ENCODE measurements at regions of chr3 and their contacts with region 1.

Region 1: DNA sequence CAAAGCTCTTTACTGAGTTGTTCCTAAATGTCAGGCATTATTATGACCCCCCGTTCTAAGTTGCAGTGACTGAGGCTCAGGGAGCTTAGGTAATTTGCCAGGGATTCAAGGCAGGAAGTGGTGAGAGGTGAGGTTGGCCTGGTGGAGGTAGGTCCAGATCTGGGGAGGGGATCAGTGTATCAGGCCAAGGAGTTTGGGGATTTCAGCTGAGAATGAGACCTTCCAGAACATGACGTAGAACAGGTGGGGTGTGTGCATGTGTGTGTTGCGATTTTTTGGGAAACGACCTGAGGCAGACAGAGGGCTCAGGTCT is 41.1 kb upstream of the MRPS22 start:
- DNase-seq: no peak
- H3K4me3 Mint-ChIP-seq: no peak overlapping the region
- H3K27ac Mint-ChIP-seq: peak overlapping the region; percentile 68
- H3K4me1 Mint-ChIP-seq: peaks cover 24% of the 10 kb centered on the region
- H3K27me3 Mint-ChIP-seq: peaks cover 8% of the 10 kb centered on the region

Region 2: DNA sequence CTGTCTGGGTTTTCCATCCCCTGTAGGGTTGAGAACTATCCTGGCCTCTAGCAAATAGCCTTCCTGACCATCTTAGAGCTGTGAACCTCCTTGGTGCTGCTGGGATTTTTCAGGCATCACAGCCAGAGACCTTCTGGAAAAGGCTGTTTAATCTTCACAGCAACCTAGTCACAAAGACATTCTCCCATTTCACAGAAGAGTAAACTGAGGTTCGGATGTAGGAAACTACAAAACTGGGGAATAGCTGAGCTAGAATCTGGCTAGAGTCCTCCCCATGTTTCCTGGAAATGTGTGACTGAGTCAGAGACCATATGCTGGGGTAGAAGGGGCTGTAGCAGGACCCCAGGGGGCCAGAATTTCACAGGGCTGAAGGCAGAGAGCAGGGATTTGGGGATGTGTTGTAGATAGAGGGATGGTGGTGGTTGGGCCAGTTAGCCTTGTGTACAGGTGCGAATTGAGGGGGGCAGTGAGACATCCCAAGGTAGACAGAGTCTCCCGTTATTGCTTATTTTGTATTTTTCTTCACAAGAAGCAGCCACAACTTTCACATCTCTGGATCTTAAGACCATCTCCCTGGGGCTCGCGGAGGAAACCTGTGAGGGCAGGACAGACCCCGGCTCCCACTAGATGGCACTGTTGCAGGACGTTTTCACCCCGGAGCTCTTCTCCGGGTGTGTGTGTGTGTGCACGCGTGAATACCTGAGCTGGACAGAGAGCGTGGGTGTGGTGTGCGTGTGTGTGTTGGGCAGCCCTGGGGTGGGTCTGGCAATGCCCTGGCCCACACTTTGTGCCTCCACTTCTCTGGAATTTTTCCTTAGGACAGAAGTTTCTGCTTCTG is 191.1 kb before region 1 on chr3:
- CTCF ChIA-PET with region 1: interaction called, 13 read pairs
- POLR2A ChIA-PET with region 1: interaction called, 4 read pairs
- DNase-seq: peak; percentile 66
- H3K4me3 Mint-ChIP-seq: no peak overlapping the region
- H3K27ac Mint-ChIP-seq: no peak overlapping the region
- H3K4me1 Mint-ChIP-seq: peaks cover 4% of the 10 kb centered on the region
- H3K27me3 Mint-ChIP-seq: no peaks in the 10 kb centered on the region

Region 3: GRCh38 chr3:139312959-139313358 is 10.2 kb after region 1 on chr3:
- CTCF ChIA-PET with region 1: no interaction called
- POLR2A ChIA-PET with region 1: no interaction called
- DNase-seq: no peak
- H3K4me3 Mint-ChIP-seq: no peak overlapping the region
- H3K27ac Mint-ChIP-seq: no peak overlapping the region
- H3K4me1 Mint-ChIP-seq: no peaks in the 10 kb centered on the region
- H3K27me3 Mint-ChIP-seq: peaks cover 29% of the 10 kb centered on the region